ENCODE measurements at regions of chr1 and their contacts with region 1.

Region 1: GRCh38 chr1:160496334-160496733 is 26.7 kb downstream of the SLAMF6 start:
- DNase-seq: no peak
- H3K4me3 Mint-ChIP-seq: no peak overlapping the region
- H3K27ac Mint-ChIP-seq: peak overlapping the region; percentile 55
- H3K4me1 Mint-ChIP-seq: peaks cover 33% of the 10 kb centered on the region
- H3K27me3 Mint-ChIP-seq: no peaks in the 10 kb centered on the region

Region 2: DNA sequence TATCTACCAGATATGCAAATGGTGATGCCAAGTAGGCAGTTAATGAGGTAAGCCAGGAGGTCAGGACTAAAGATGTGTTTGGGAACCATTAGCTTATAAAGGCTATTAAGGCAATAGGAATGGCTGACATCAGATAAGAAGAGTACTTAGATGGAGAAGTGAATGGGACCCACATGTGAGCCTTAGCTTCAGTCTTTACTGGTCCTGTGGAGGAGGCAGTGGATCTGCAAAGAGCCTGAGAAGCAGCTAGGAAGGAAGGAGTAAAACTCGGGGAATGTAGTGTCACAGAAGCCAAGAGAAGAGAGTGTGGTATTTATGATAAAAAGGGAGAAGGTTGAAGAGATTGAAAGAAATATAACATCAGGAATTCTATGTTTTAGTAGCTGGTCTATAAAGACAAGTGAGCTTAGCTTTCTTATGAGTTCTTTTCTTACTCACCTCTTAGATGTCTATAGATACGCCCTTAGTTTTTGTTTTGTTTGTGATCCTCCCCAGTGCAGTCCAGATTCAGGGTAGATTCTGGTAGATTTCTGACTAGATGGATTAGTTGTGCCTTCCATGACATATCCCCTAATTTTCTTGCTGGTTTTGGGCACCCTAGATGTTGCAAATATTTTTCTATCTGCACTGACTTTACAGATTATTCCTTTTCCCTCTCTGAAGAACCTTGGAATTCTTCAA is 12.7 kb before region 1 on chr1:
- intact Hi-C with region 1: loop called (anchors 2 kb)
- DNase-seq: no peak
- H3K4me3 Mint-ChIP-seq: no peak overlapping the region
- H3K27ac Mint-ChIP-seq: peak overlapping the region; percentile 51
- H3K4me1 Mint-ChIP-seq: peaks cover 33% of the 10 kb centered on the region
- H3K27me3 Mint-ChIP-seq: no peaks in the 10 kb centered on the region

Region 3: GRCh38 chr1:161374373-161374772 is 878.0 kb after region 1 on chr1:
- intact Hi-C with region 1: no loop called
- DNase-seq: no peak
- H3K4me3 Mint-ChIP-seq: no peak overlapping the region
- H3K27ac Mint-ChIP-seq: no peak overlapping the region
- H3K4me1 Mint-ChIP-seq: peaks cover 2% of the 10 kb centered on the region
- H3K27me3 Mint-ChIP-seq: no peaks in the 10 kb centered on the region

Measured in activated CD4-positive, alpha-beta T cell treated with anti-CD3 and anti-CD28 coated beads, Interleukin-2, amount 10 ng/mL, durations not matched to agents 24 days and 14 days (primary cell).